Left ventricle myocardium inferior (tissue), 1 donor: ENCODE measurements at regions of chr16 and their contacts with region 1.

Region 1: GRCh38 chr16:82263521-82264143 is 93.6 kb upstream of the MPHOSPH6 start:
- DNase-seq: peak; percentile 22
- H3K4me3 ChIP-seq: no peak overlapping the region
- H3K27ac ChIP-seq: no peak overlapping the region
- H3K4me1 ChIP-seq: peaks cover 13% of the 10 kb centered on the region
- H3K27me3 ChIP-seq: peaks cover 5% of the 10 kb centered on the region
- CTCF ChIP-seq: peak; percentile 95

Region 2: DNA sequence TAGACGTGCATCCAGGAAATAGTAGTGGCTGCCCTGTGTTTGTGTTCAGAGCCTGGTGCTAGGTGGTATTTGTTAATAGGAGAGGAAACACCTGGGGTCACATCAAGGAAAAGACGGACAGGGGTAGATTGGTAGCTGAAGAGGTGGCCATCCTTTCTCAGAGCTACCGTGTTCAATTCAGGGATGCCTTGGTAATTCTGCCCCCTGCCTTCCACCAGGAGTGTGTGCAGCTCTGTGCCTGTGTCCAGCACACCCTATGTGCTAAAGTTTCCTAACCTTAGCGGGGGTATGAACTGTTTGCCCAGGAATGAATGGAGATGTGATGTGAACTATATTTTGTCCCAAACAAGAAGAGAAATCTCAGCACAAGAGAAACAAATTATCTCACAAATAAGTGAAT is 80.5 kb after region 1 on chr16:
- intact Hi-C with region 1: loop called (anchors 2 kb)
- DNase-seq: no peak
- H3K4me3 ChIP-seq: no peak overlapping the region
- H3K27ac ChIP-seq: no peak overlapping the region
- H3K4me1 ChIP-seq: no peaks in the 10 kb centered on the region
- H3K27me3 ChIP-seq: peaks cover 6% of the 10 kb centered on the region
- CTCF ChIP-seq: peak; percentile 71

Region 3: GRCh38 chr16:83441517-83441916 is 1177.9 kb after region 1 on chr16:
- intact Hi-C with region 1: loop called (anchors 10 kb)
- DNase-seq: no peak
- H3K4me3 ChIP-seq: no peak overlapping the region
- H3K27ac ChIP-seq: no peak overlapping the region
- H3K4me1 ChIP-seq: peaks cover 7% of the 10 kb centered on the region
- H3K27me3 ChIP-seq: no peaks in the 10 kb centered on the region
- CTCF ChIP-seq: no peak